Calu3 (cell line): ENCODE measurements at regions of chr3 and their contacts with region 1.

Region 1: DNA sequence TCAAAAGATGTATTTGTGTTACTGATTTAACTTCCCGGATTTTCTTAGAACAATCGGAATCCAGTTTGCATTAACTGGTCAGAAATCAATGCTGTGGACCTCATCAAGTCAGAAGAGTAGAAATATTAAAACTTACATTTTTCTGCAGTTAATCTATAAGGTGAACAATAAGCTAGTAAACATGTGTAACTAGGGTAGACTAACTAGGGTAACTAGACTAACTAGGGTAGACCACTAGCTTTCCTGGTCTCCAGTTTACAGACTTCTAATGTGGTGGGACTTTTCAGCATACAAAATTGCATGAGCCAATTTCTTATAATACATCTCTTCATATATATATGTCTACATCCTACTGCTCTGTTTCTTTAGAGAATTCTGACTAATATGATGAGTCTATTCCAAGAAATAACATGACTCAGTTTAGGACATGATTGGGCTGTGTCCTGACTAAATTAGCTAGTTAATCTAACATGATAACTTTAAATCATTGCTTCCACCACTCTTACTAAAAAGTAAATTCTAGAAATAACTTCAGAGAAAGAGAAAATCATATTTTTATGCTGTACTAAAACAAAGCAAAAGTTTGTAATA is 5.3 kb downstream of the PLSCR2 start:
- DNase-seq: no peak
- H3K4me3 Mint-ChIP-seq: no peak overlapping the region
- H3K27ac Mint-ChIP-seq: no peak overlapping the region
- H3K4me1 Mint-ChIP-seq: peaks cover 38% of the 10 kb centered on the region
- H3K27me3 Mint-ChIP-seq: no peaks in the 10 kb centered on the region
- CTCF ChIP-seq: no peak

Region 2: DNA sequence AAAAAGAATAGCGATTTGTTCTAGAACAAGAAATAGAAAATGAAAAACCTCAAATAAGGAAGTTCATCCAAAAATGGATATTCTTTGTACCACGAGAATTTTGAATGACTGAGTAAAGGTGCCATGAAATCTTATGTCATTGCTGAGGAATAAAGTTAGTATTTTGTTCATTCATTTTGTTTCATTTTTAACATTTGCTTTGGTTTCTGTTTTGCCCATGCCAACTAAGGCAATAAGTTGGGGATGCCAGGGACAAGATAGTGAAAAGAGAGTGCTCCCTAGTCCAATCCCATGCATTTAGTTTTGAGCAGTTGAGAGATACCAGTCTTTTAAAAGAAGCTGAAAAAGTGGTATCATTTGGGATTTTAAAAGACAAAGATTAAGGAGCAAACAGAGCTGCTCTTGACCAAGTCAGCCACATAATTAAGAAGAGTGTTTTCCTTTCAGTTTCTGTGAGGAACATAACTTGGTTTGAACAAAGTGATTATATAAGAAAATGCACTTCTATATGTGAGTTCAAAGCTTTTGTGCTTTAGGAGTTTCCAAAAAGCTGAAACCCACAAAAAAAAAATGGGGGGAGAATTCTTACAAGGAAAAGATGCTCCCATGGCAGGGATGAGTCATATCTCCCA is 504.5 kb before region 1 on chr3:
- CTCF ChIA-PET with region 1: interaction called, 10 read pairs
- intact Hi-C with region 1: no loop called
- DNase-seq: no peak
- H3K4me3 Mint-ChIP-seq: no peak overlapping the region
- H3K27ac Mint-ChIP-seq: no peak overlapping the region
- H3K4me1 Mint-ChIP-seq: no peaks in the 10 kb centered on the region
- H3K27me3 Mint-ChIP-seq: no peaks in the 10 kb centered on the region
- CTCF ChIP-seq: no peak

Region 3: DNA sequence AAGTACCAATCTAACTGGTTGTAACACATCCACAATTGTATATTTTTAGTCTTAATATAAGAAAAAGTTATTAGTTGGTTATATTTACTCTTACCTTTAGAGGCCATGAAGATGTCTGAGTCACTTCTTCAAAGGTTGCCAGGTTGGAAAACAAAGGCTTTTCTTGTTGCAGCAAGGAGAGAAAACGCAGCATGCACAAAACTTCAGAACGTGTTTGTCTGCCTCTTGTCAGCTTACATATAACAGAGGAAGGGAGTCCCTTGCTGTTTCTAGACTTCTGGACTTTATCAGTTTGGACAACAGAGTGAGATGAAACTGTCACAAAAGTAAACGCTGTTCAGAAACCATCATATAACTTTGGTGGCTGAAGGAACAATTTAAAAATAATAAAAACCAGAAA is 141.0 kb after region 1 on chr3 and contains the start of gene PLSCR5:
- CTCF ChIA-PET with region 1: no interaction called
- intact Hi-C with region 1: no loop called
- DNase-seq: peak; percentile 51
- H3K4me3 Mint-ChIP-seq: no peak within 1 kb of the TSS
- H3K27ac Mint-ChIP-seq: peak within 1 kb of the TSS; percentile 39
- H3K4me1 Mint-ChIP-seq: peaks cover 12% of the 10 kb centered on the region
- H3K27me3 Mint-ChIP-seq: no peaks in the 10 kb centered on the region
- CTCF ChIP-seq: no peak
- total RNA-seq, gene PLSCR5: not detected in 2 replicates